Heart left ventricle (tissue), 16 donors: ENCODE measurements at regions of chr1 and their contacts with region 1.

Region 1: DNA sequence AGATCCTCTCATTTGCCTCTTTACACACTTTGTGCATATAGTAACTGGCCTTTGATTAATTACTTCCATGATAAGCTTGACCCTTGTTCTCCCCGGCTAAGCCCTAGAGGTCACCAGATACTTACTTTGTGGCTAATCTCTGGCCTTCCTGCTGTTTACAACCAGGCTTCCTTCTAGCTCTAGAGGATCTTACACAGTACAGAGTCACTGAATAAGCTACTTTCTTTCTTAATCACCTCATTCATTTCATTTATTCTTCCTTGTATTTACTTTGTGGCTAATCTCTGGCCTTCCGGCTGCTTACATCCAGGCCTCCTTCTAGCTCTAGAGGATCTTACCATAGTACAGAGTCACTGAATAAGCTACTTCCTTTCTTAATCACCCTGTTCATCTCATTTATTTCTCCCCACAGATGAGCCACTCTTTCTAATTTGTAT is 144.3 kb upstream of the C1orf21 start:
- DNase-seq: peak in 1 of 5 donors; percentile 19
- ATAC-seq: peak; percentile 82 to 92 (median 86)
- H3K4me3 ChIP-seq: no peak overlapping the region
- H3K27ac ChIP-seq: peak overlapping the region in 3 of 12 donors; percentile 24 to 59 (median 35)
- H3K4me1 ChIP-seq: peaks cover 0 to 20% (median 4%) of the 10 kb centered on the region in 12 donors
- H3K27me3 ChIP-seq: no peaks in the 10 kb centered on the region
- CTCF ChIP-seq: peak; percentile 0 to 66 (median 49)
- POLR2A ChIP-seq: no peak

Region 2: GRCh38 chr1:183339556-183340167 is 902.9 kb before region 1 on chr1:
- intact Hi-C with region 1: no loop called
- DNase-seq: no peak
- ATAC-seq: peak in 1 of 4 donors; percentile 34
- H3K4me3 ChIP-seq: no peak overlapping the region
- H3K27ac ChIP-seq: no peak overlapping the region
- H3K4me1 ChIP-seq: no peaks in the 10 kb centered on the region
- H3K27me3 ChIP-seq: no peaks in the 10 kb centered on the region
- CTCF ChIP-seq: no peak
- POLR2A ChIP-seq: no peak

Region 3: GRCh38 chr1:184283999-184284398 is 41.5 kb after region 1 on chr1:
- intact Hi-C with region 1: no loop called
- DNase-seq: peak in 4 of 5 donors; percentile 36 to 49 (median 48)
- ATAC-seq: peak; percentile 78 to 89 (median 84)
- H3K4me3 ChIP-seq: no peak overlapping the region
- H3K27ac ChIP-seq: peak overlapping the region in 11 of 12 donors; percentile 34 to 77 (median 64)
- H3K4me1 ChIP-seq: peaks cover 0 to 29% (median 7%) of the 10 kb centered on the region in 12 donors
- H3K27me3 ChIP-seq: no peaks in the 10 kb centered on the region
- CTCF ChIP-seq: no peak
- POLR2A ChIP-seq: no peak

Region 4: GRCh38 chr1:184379111-184379946 is 136.8 kb after region 1 on chr1:
- intact Hi-C with region 1: loop called in 3 of 10 experiments (anchors 5 to 10 kb)
- DNase-seq: no peak
- ATAC-seq: peak; percentile 51 to 62 (median 56)
- H3K4me3 ChIP-seq: no peak overlapping the region
- H3K27ac ChIP-seq: no peak overlapping the region
- H3K4me1 ChIP-seq: peaks cover 0 to 8% (median 0%) of the 10 kb centered on the region in 12 donors
- H3K27me3 ChIP-seq: no peaks in the 10 kb centered on the region
- CTCF ChIP-seq: peak in 10 of 12 donors; percentile 17 to 48 (median 32)
- POLR2A ChIP-seq: no peak

Region 5: GRCh38 chr1:184945029-184945428 is 702.5 kb after region 1 on chr1:
- intact Hi-C with region 1: no loop called
- DNase-seq: no peak
- ATAC-seq: peak; percentile 27 to 65 (median 54)
- H3K4me3 ChIP-seq: no peak overlapping the region
- H3K27ac ChIP-seq: peak overlapping the region in 11 of 12 donors; percentile 15 to 72 (median 62)
- H3K4me1 ChIP-seq: peaks cover 0 to 61% (median 48%) of the 10 kb centered on the region in 12 donors
- H3K27me3 ChIP-seq: no peaks in the 10 kb centered on the region
- CTCF ChIP-seq: no peak
- POLR2A ChIP-seq: no peak